Activated CD8-positive, alpha-beta memory T cell treated with anti-CD3 and anti-CD28 coated beads, Interleukin-2, amount 10 ng/mL, durations not matched to agents 7 days and 5 days (primary cell): ENCODE measurements at regions of chr9 and their contacts with region 1.

Region 1: DNA sequence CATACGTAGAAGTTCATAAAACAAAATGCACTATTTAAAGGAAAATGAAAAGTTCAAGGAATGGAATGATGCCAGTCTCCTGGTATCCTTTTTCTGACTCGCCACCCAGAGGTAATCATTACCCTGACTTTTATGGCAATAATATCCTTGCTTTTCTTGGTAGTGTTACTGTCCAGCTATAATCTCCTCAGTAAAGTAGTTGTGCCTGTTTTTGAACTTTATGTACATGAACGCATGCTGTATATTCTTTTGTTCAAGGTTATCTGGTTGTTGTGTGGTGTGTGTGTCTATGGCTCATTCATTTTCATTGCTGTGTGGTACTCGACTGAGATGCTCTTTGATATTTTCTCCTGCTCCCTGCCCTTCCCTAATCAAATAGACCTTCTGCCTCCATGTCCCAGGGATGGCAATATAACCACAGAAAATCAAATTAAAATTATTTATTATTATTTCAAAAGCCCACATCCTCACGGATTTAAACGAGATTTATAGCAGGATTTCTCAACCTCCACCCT is 29.2 kb upstream of the FBP1 start:
- DNase-seq: no peak
- ATAC-seq: peak; percentile 10
- H3K4me3 Mint-ChIP-seq: no peak overlapping the region
- H3K27ac Mint-ChIP-seq: no peak overlapping the region
- H3K4me1 Mint-ChIP-seq: peaks cover 12% of the 10 kb centered on the region
- H3K27me3 Mint-ChIP-seq: peaks cover 44% of the 10 kb centered on the region

Region 2: GRCh38 chr9:94649100-94649819 is 19.2 kb before region 1 on chr9:
- CTCF ChIA-PET with region 1: interaction called, 10 read pairs
- DNase-seq: no peak
- ATAC-seq: no peak
- H3K4me3 Mint-ChIP-seq: no peak overlapping the region
- H3K27ac Mint-ChIP-seq: no peak overlapping the region
- H3K4me1 Mint-ChIP-seq: no peaks in the 10 kb centered on the region
- H3K27me3 Mint-ChIP-seq: peaks cover 20% of the 10 kb centered on the region

Region 3: DNA sequence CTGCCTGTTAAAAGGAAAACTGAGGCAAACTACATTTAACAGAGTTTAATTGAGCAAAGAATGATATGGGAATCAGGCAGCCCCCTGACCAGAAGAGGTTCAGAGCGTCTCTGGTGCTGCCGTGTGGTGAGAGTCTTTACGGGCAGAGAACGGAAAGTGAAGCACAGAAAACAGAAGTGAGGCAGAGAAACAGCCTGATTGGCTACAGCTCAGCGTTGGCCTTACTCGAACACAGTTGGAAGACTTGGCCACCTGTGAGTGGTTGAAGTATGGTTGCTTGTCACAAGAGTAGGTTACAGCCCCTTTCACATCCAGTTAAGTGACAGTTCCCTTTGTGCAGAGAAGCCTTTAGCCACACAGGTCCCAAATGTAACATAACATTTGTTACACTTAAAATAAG is 12.3 kb before region 1 on chr9:
- CTCF ChIA-PET with region 1: interaction called, 21 read pairs
- DNase-seq: peak; percentile 66
- ATAC-seq: peak; percentile 93
- H3K4me3 Mint-ChIP-seq: peak overlapping the region; percentile 69
- H3K27ac Mint-ChIP-seq: peak overlapping the region; percentile 14
- H3K4me1 Mint-ChIP-seq: peaks cover 17% of the 10 kb centered on the region
- H3K27me3 Mint-ChIP-seq: peaks cover 15% of the 10 kb centered on the region

Region 4: DNA sequence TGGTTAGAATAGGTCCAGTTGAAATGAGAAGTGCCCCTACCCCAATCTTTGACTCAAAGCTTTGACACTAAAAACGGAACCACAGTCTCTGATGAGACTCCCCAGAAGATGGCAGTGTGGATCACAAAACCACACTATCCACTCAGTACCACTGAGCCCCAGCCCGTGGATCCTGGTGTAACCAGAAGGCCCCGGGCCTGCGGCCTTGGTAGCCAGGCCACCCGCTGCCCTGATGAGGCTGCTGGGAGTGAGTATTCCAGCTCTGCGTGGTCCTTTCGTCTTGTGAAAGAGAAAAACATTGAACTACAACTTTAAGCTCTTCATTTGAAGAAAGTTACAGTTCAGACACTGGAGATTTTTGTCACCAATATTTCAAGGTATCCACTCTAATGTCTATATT is 13.0 kb after region 1 on chr9:
- CTCF ChIA-PET with region 1: interaction called, 28 read pairs
- DNase-seq: peak; percentile 66
- ATAC-seq: peak; percentile 68
- H3K4me3 Mint-ChIP-seq: no peak overlapping the region
- H3K27ac Mint-ChIP-seq: no peak overlapping the region
- H3K4me1 Mint-ChIP-seq: no peaks in the 10 kb centered on the region
- H3K27me3 Mint-ChIP-seq: peaks cover 57% of the 10 kb centered on the region

Region 5: GRCh38 chr9:94726495-94727191 is 58.2 kb after region 1 on chr9 and contains the start of gene AOPEP:
- CTCF ChIA-PET with region 1: interaction called, 10 read pairs
- DNase-seq: peak; percentile 99
- ATAC-seq: peak; percentile 99
- H3K4me3 Mint-ChIP-seq: peak within 1 kb of the TSS; percentile 94
- H3K27ac Mint-ChIP-seq: peak within 1 kb of the TSS; percentile 98
- H3K4me1 Mint-ChIP-seq: peaks cover 12% of the 10 kb centered on the region
- H3K27me3 Mint-ChIP-seq: no peaks in the 10 kb centered on the region
- total RNA-seq, gene AOPEP: 9.8 to 13.7 TPM

Region 6: GRCh38 chr9:95181226-95181818 is 512.8 kb after region 1 on chr9:
- CTCF ChIA-PET with region 1: interaction called, 10 read pairs
- DNase-seq: no peak
- ATAC-seq: no peak
- H3K4me3 Mint-ChIP-seq: no peak overlapping the region
- H3K27ac Mint-ChIP-seq: no peak overlapping the region
- H3K4me1 Mint-ChIP-seq: peaks cover 2% of the 10 kb centered on the region
- H3K27me3 Mint-ChIP-seq: no peaks in the 10 kb centered on the region